Heart left ventricle (tissue), 16 donors: ENCODE measurements at regions of chr3 and their contacts with region 1.

Region 1: GRCh38 chr3:128584412-128585020 is 66.1 kb downstream of the RPN1 start:
- DNase-seq: peak; percentile 66 to 84 (median 75)
- ATAC-seq: peak; percentile 95 to 99 (median 99)
- H3K4me3 ChIP-seq: no peak overlapping the region
- H3K27ac ChIP-seq: no peak overlapping the region
- H3K4me1 ChIP-seq: peaks cover 0 to 8% (median 0%) of the 10 kb centered on the region in 12 donors
- H3K27me3 ChIP-seq: no peaks in the 10 kb centered on the region
- CTCF ChIP-seq: peak; percentile 54 to 80 (median 69)
- POLR2A ChIP-seq: no peak

Region 2: DNA sequence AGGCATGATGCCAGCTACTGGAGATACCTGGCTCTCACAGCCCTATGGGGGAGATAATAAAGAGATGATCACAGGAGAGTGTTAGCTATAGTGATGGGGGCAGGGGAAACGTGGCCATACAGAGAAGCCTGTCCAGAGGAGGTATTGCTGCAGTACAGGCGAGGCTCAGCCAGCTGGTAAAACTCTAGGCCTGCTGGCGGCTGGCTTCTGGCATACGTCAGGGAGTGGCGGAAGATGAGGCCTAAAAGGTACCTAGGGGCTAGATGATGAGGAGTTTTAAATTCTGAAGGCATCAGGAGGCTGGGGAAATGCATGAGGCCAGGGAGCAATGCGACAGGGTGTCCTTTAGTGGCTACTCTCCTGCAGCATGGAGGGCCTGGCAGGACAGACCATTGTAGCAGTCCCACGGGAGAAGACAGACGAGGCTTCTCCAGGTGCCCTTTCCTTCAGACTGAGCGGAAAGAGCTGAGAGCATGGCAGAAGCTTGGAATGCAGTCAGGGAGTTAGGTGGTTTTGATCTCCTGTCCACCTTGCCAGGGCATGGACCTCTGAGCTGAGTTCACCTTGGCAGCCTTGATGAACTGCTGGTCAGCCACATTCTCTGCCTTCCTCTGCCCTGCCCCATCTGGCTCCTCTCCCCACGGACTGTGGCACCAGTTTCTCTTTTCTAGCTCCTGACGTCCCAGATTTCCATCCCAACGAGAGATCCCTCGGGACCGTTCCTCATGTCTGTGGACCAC is 320.4 kb before region 1 on chr3:
- intact Hi-C with region 1: loop called in 1 of 10 experiments (anchors 5 kb)
- DNase-seq: no peak
- ATAC-seq: no peak
- H3K4me3 ChIP-seq: no peak overlapping the region
- H3K27ac ChIP-seq: no peak overlapping the region
- H3K4me1 ChIP-seq: peaks cover 0 to 8% (median 0%) of the 10 kb centered on the region in 12 donors
- H3K27me3 ChIP-seq: no peaks in the 10 kb centered on the region
- CTCF ChIP-seq: no peak
- POLR2A ChIP-seq: no peak

Region 3: DNA sequence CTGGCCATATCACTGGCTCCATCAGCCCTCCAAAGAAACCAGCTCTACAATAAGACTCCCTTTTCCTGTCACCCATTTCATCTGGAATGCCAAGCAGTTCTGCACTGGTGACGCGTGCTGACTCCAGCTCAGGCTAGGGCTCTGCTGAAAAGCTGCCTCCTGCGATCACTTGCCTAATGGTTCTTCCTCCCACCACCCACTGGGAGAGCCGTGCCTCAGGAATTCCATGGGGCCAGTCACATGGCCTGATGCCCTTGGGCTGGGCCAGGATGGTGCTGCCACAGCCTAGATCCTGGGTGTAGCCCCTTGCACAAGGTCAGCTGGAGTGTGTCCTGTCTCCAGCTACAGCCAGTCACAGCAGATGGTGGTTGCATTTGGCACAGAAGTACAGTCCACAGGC is 216.8 kb before region 1 on chr3:
- intact Hi-C with region 1: no loop called
- DNase-seq: peak in 1 of 5 donors; percentile 48
- ATAC-seq: peak in 1 of 4 donors; percentile 7
- H3K4me3 ChIP-seq: no peak overlapping the region
- H3K27ac ChIP-seq: peak overlapping the region in 9 of 12 donors; percentile 25 to 84 (median 46)
- H3K4me1 ChIP-seq: peaks cover 3 to 88% (median 44%) of the 10 kb centered on the region in 12 donors
- H3K27me3 ChIP-seq: no peaks in the 10 kb centered on the region
- CTCF ChIP-seq: no peak
- POLR2A ChIP-seq: no peak

Region 4: GRCh38 chr3:128426128-128426921 is 158.2 kb before region 1 on chr3:
- intact Hi-C with region 1: loop called in 5 of 10 experiments (anchors 2 to 10 kb)
- DNase-seq: peak in 4 of 5 donors; percentile 36 to 83 (median 46)
- ATAC-seq: peak; percentile 21 to 93 (median 80)
- H3K4me3 ChIP-seq: peak overlapping the region in 10 of 12 donors; percentile 12 to 50 (median 34)
- H3K27ac ChIP-seq: no peak overlapping the region
- H3K4me1 ChIP-seq: peaks cover 0 to 14% (median 4%) of the 10 kb centered on the region in 12 donors
- H3K27me3 ChIP-seq: peaks cover 0 to 30% (median 1%) of the 10 kb centered on the region in 9 donors
- CTCF ChIP-seq: peak; percentile 52 to 99 (median 89)
- POLR2A ChIP-seq: no peak

Region 5: DNA sequence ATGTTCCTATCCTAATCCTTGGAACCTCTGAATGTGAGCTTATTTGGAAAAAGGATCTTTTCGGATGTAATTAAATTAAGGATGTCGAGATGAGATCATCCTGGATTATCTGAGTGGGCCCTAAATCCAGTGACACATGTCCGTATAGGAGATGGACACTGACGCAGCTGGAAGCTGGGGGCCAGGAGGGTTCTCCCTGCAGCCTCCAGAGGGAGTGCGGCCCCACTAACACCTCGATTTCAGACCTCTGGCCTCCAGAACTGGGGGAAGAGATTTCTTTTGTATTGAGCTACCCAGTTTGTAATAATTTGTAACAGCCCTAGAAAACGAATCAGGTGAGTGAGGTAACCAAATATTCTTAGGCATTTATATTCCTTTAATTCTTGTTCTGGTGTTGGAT is 120.3 kb before region 1 on chr3:
- intact Hi-C with region 1: loop called in 2 of 10 experiments (anchors 5 to 10 kb)
- DNase-seq: no peak
- ATAC-seq: peak in 1 of 4 donors; percentile 53
- H3K4me3 ChIP-seq: no peak overlapping the region
- H3K27ac ChIP-seq: no peak overlapping the region
- H3K4me1 ChIP-seq: no peaks in the 10 kb centered on the region
- H3K27me3 ChIP-seq: peaks cover 0 to 20% (median 0%) of the 10 kb centered on the region in 9 donors
- CTCF ChIP-seq: peak; percentile 27 to 60 (median 38)
- POLR2A ChIP-seq: no peak

Region 6: DNA sequence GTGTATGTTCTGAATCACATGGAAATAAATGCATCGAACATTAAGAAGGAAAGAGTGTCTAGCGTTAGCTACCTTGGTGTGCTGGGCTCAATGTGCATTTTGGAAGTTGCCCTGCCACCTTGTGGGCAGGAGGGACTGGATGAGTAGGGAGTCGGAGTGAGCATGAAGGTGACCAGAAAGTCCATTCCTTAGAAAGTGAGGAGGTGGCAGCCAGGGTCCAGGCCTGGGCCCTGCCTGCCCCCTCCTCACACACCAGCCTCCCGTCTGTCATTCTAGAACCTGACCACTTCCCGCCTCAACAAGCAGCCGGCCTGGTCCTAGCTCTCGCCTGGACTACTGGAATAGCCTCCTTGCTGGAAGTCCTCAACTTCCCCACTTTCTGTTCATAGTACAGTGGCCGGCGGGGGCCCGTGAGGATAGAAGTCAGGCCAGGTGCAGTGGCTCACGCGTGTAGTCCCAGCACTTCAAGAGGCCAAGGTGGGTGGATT is 81.3 kb before region 1 on chr3:
- intact Hi-C with region 1: loop called in 4 of 10 experiments (anchors 5 to 10 kb)
- DNase-seq: no peak
- ATAC-seq: peak in 2 of 4 donors; percentile 23 to 44
- H3K4me3 ChIP-seq: no peak overlapping the region
- H3K27ac ChIP-seq: no peak overlapping the region
- H3K4me1 ChIP-seq: peaks cover 0 to 2% (median 0%) of the 10 kb centered on the region in 12 donors
- H3K27me3 ChIP-seq: peaks cover 0 to 45% (median 8%) of the 10 kb centered on the region in 9 donors
- CTCF ChIP-seq: peak in 5 of 12 donors; percentile 7 to 30 (median 16)
- POLR2A ChIP-seq: no peak